Dorsolateral prefrontal cortex (tissue), 120 donors: ENCODE measurements at regions of chr19 and their contacts with region 1.

Region 1: DNA sequence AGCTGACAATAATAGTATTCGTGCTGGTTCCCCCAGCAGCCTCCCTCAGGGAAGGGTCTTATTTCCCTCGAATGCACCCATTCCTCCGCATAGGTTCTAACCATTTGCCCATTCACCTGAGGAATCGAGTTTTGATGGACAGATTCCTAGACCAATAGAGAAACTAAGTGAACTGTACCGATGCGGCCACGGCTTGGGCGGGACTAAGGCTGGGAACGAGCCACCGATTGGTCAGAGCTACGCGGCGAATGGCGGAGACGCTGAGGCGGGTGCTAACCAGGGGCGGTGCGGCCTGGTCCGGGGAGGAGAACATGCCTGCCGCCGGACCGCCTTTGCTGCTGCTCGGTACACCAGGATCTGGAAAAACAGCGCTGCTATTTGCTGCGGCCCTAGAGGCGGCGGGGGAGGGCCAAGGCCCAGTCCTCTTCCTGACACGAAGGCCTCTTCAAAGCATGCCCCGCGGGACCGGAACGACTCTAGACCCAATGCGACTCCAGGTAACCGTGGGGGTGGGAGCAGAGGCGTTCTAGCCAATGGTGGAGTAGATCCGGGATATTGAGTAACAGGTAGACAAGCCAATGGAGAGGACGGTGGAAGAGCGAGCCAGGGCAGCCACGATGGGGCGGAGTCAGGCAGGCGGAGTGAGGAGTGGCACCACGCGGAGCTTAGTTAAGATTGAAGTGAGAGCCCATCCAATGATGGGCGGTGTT is at the start of gene SWSAP1:
- DNase-seq: peak; percentile 92 to 99 (median 99)
- H3K4me3 ChIP-seq: peak within 1 kb of the TSS; percentile 51 to 99 (median 77)
- H3K27ac ChIP-seq: peak within 1 kb of the TSS; percentile 74 to 99 (median 94)
- H3K27me3 ChIP-seq: no peaks in the 10 kb centered on the region
- CTCF ChIP-seq: peak in 16 of 56 donors; percentile 3 to 51 (median 20)
- total RNA-seq, gene SWSAP1: 0.29 to 2.7 (median 1.1) TPM in 119 of 120 experiments, not detected in the other

Region 2: DNA sequence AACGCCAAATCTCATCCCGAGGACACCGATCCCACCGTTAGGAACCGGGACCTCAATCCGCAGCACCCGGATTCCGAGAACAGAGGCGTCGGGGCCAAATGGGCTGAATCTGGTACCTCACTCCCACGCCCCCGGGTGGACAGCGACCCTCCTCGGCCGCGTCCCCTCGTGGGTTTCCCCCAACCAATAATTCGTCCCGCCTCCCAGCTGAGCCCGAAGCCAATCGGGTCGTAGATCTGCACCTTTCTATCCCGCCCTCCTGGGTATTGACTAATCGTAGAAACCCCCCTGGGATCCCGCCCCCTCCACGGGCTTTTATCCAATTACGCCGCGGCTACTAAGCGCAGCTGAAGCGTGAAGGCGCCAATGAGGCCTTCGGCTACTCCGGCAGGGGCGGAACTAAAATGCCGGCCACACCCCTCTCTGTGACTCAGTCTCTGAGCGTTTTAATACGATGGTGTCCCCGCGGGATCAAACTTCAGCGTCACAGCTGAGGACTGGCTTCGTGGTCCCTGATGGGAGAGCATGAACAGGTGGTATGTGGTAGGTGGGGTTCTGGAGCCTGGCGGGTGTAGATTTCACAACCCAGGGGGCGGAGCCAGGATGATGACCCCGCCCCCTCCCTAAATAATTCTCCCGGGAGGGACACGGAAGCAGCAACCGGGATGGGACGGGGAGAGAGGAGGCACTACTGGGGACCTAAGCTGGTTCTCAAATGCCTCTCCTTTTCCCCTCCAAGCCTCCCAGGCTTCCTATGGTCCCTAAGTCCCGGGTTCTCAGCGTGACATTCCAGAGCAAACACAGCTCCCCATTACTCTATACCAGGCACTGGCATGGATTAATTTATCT is 28.3 kb before region 1 on chr19 and contains the starts of genes CCDC159 and TMEM205:
- intact Hi-C with region 1: loop called in 1 of 2 experiments (anchors 2 kb)
- DNase-seq: peak; percentile 96 to 99 (median 99)
- H3K4me3 ChIP-seq: peak within 1 kb of the TSS; percentile 39 to 94 (median 82)
- H3K27ac ChIP-seq: peak within 1 kb of the TSS in 58 of 59 donors; percentile 13 to 93 (median 83)
- H3K27me3 ChIP-seq: no peaks in the 10 kb centered on the region
- CTCF ChIP-seq: peak in 35 of 56 donors; percentile 6 to 64 (median 31)
- total RNA-seq, gene CCDC159: 31.2 to 104 (median 61.7) TPM
- total RNA-seq, gene TMEM205: 70.3 to 122 (median 96.4) TPM